H1 (cell line): ENCODE measurements at regions of chr1 and their contacts with region 1.

Region 1: DNA sequence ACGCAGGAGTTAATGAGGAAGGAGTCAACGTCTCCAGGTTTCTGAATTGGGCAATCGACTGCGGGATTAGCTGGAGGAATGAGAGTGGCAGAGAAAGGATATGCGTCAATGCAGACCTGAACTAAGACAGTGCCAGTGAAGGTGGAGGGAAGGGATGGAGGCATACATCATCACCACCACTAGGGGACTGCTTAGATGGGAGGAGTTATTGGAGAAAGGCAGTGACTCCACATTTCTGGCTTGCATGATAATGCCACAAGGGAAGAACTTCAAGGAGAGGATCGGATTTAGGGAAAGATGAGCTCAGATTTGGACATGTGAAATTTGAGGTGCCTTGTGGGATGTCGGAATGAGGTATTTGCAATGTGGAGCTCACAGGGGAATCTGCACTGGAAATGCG is 17.5 kb downstream of the VASH2 start:
- DNase-seq: peak in 1 of 2 experiments; percentile 61
- H3K4me3 ChIP-seq: no peak overlapping the region
- H3K27ac ChIP-seq: peak overlapping the region; percentile 20
- H3K4me1 ChIP-seq: peaks cover 0 to 20% (median 8%) of the 10 kb centered on the region in 4 experiments; a peak in 5 of 7 replicates
- H3K27me3 ChIP-seq: no peaks in the 10 kb centered on the region
- CTCF ChIP-seq: peak; percentile 54 to 96 (median 65)
- EP300 ChIP-seq: no peak
- POLR2A ChIP-seq: peak; percentile 52 to 65
- RAD21 ChIP-seq: peak; percentile 28 to 42

Region 2: GRCh38 chr1:212899845-212900244 is 68.0 kb before region 1 on chr1:
- CTCF ChIA-PET with region 1: interaction called, 18 read pairs
- POLR2A ChIA-PET with region 1: interaction called, 5 read pairs
- DNase-seq: no peak
- H3K4me3 ChIP-seq: no peak overlapping the region
- H3K27ac ChIP-seq: peak overlapping the region; percentile 8; the same call in 1 of the 2 replicates
- H3K4me1 ChIP-seq: peaks cover 3 to 9% (median 4%) of the 10 kb centered on the region in 4 experiments; a peak in 5 of 7 replicates
- H3K27me3 ChIP-seq: no peaks in the 10 kb centered on the region
- CTCF ChIP-seq: no peak
- EP300 ChIP-seq: no peak
- POLR2A ChIP-seq: no peak; a peak in 1 of 3 replicates
- RAD21 ChIP-seq: no peak

Region 3: GRCh38 chr1:212920896-212921295 is 46.9 kb before region 1 on chr1:
- CTCF ChIA-PET with region 1: interaction called, 29 read pairs
- POLR2A ChIA-PET with region 1: interaction called, 18 read pairs
- DNase-seq: peak in 1 of 2 experiments; percentile 51
- H3K4me3 ChIP-seq: no peak overlapping the region
- H3K27ac ChIP-seq: no peak overlapping the region
- H3K4me1 ChIP-seq: peaks cover 1 to 15% (median 10%) of the 10 kb centered on the region in 4 experiments
- H3K27me3 ChIP-seq: no peaks in the 10 kb centered on the region
- CTCF ChIP-seq: peak; percentile 52 to 78 (median 58)
- EP300 ChIP-seq: no peak
- POLR2A ChIP-seq: no peak
- RAD21 ChIP-seq: peak; percentile 59 to 70

Region 4: DNA sequence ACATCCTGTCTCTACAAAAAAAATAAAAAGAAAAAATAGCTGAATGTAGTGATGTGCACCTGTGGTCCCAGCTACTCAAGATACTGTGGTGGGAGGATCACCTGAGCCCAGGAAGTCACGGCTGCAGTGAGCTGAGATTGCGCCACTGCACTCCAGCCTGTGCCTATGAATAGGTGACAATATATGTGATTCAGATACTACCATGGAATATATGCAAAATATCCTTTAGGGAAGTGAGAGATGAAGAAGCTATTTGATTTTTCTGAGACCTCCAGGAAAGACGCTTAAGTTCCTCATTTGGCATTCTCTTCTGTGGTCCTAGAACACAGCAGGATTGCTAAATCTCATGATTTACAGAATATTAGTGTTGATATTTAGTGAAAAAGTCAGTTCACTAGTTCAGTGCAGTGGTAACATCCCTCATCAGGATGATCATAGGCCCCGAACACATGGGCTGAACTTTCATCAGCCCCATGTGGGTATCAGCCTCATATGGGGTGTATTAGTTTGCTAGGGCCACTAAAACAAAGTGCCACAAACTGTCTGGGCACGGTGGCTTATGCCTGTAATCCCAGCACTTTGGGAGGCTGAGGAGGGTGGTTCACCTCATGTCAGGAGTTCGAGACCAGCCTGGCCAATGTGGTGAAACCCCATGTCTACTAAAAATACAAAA is 23.4 kb before region 1 on chr1:
- CTCF ChIA-PET with region 1: interaction called, 7 read pairs
- POLR2A ChIA-PET with region 1: interaction called, 172 read pairs
- DNase-seq: no peak
- H3K4me3 ChIP-seq: no peak overlapping the region
- H3K27ac ChIP-seq: no peak overlapping the region
- H3K4me1 ChIP-seq: peaks cover 0 to 2% (median 0%) of the 10 kb centered on the region in 4 experiments; a peak in 1 of 7 replicates
- H3K27me3 ChIP-seq: peaks cover 0 to 3% (median 0%) of the 10 kb centered on the region in 4 experiments; a peak in 1 of 7 replicates
- CTCF ChIP-seq: no peak
- EP300 ChIP-seq: no peak
- POLR2A ChIP-seq: no peak
- RAD21 ChIP-seq: no peak

Region 5: GRCh38 chr1:212981571-212982328 is 13.9 kb after region 1 on chr1:
- CTCF ChIA-PET with region 1: interaction called, 64 read pairs
- POLR2A ChIA-PET with region 1: interaction called, 240 read pairs
- DNase-seq: peak in 1 of 2 experiments; percentile 43
- H3K4me3 ChIP-seq: no peak overlapping the region
- H3K27ac ChIP-seq: no peak overlapping the region
- H3K4me1 ChIP-seq: peaks cover 0 to 8% (median 4%) of the 10 kb centered on the region in 4 experiments
- H3K27me3 ChIP-seq: no peaks in the 10 kb centered on the region
- CTCF ChIP-seq: no peak
- EP300 ChIP-seq: no peak
- POLR2A ChIP-seq: peak; percentile 61 to 71
- RAD21 ChIP-seq: no peak

Region 6: DNA sequence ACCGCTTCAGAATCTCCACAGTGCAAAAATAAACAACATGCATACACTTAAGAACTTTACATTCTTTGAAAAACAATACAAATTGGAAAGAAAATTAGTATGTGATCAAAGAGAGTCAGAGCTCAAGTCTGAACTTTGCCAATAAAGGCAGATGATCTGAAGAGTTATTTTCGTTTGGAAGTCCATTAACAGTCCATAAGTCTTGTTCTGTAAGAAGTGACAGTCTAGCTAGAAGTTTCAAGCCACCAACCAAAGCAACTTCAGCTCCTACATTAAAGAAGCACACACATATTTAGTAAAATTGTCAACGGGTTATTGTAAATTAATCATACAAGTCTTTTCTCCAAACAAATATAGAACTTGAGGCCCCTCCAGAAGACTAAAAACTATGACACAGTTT is 27.1 kb after region 1 on chr1:
- CTCF ChIA-PET with region 1: interaction called, 41 read pairs
- POLR2A ChIA-PET with region 1: interaction called, 5 read pairs
- DNase-seq: no peak
- H3K4me3 ChIP-seq: no peak overlapping the region
- H3K27ac ChIP-seq: no peak overlapping the region
- H3K4me1 ChIP-seq: no peaks in the 10 kb centered on the region
- H3K27me3 ChIP-seq: peaks cover 0 to 1% (median 0%) of the 10 kb centered on the region in 4 experiments; a peak in 1 of 7 replicates
- CTCF ChIP-seq: no peak
- EP300 ChIP-seq: no peak
- POLR2A ChIP-seq: no peak
- RAD21 ChIP-seq: no peak